Left cardiac atrium (tissue), 4 donors: ENCODE measurements at regions of chr5 and their contacts with region 1.

Region 1: GRCh38 chr5:136212252-136212721 is 19.3 kb upstream of the SMIM32 start:
- DNase-seq: peak; percentile 62
- ATAC-seq: peak in 1 of 2 donors; percentile 41

Region 2: DNA sequence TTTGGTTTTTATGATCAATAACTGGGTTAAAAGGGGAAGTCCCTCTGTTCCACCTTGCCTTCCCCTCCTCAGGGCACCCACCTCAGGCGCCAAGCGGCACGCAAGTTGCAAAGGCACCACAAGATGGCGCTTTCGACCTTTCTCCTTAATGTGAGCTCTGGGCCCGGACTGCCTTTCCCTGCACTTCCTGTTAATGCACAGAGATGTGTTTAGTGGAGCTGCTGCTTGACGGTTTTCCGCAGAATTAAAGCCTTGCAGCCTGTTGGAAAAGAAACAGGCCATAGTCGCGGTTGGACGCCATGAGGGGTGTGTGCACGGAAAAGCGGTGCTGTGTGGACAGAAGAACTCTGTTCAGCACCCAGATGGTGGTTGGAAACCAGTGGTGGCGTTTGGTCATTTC is 651.4 kb before region 1 on chr5:
- intact Hi-C with region 1: loop called in 1 of 2 experiments (anchors 10 kb)
- DNase-seq: peak; percentile 78
- ATAC-seq: peak; percentile 84 to 91

Region 3: DNA sequence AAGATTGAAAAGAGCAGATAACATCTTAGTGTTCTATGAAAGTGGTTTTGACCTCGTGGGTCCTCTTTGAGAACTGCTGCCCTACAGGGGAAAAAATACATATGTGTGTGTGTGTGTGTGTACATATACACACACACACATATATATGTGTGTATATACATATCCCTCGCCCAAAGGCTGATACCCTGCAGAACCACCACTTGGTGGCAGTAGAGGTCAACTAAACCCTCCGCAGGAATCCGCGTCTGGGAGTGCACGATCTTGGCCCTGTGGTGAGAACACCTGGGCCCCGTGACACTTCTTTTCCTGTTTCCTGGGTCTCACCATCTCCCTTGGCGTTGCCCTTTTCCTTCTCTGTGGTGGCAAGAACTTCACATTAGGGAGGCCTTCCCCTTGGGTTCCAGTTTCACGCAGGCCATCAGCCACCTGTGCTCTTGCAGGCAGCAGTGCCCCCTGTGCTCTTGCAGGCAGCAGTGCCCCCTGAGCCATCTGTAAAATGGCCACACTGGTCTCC is 324.9 kb before region 1 on chr5:
- intact Hi-C with region 1: loop called (anchors 2 to 5 kb)
- DNase-seq: peak; percentile 38
- ATAC-seq: peak; percentile 78 to 88

Region 4: DNA sequence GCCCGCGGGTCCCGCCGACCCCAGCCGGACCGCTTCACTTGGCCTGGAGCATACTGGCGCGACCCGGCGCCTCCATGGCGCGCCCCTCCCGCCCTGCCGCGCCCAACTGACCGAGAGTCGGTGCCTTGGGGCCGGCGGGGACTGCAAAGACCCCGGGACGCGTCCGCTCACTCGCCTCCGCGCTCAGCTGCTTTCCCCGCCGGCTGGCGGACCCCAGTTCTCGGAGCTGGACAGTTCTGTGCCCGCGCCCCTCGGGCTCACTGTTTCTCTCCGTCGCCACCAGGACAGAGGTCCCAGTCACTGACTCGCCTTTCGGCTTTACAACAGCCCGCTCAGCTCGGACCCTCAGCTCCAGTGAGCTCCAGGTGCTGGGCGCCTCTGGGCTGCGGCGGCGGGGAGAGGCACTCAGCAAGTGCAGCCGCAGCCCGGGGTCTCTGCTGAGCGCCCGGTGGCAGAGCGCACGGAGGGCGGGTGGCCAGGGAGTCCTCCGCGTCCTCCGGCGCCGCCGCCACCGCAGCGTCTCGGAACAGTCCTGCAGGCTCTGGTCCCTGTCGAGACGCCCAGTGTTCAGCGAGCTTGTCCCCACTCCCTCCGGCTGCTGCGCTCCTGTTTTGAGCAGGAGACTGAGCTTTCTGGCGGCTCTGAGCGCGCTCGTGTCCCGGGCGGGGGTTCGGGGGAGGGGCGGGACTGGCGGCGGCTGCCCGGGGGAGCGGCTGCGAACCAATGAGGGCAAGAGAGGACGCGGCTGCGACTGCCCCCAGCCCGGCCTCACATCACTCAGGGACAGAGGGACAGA is 19.6 kb before region 1 on chr5 and contains the start of gene SMIM32:
- intact Hi-C with region 1: no loop called
- DNase-seq: no peak
- ATAC-seq: peak; percentile 32 to 66
- total RNA-seq, gene SMIM32: not detected

Region 5: DNA sequence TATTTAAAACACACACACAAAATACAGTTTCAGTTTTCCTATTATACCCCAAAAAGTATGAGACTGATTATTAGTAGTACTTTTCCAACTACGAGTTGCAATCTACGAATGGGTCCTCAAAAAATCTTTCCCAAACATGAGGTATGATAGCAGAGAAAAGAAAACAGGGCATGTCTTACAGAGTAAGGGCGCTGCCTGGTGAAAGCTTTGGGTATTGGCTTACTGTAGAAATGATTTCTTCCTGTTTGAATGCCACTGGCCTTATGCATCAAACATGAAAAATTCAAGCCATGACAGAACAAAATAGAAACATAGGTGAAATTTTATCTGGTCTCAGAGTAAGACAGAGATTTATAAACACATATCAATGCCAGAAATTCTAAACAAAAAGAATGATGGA is 838.9 kb after region 1 on chr5:
- intact Hi-C with region 1: no loop called
- DNase-seq: no peak
- ATAC-seq: no peak